ENCODE measurements at regions of chr3 and their contacts with region 1.

Region 1: DNA sequence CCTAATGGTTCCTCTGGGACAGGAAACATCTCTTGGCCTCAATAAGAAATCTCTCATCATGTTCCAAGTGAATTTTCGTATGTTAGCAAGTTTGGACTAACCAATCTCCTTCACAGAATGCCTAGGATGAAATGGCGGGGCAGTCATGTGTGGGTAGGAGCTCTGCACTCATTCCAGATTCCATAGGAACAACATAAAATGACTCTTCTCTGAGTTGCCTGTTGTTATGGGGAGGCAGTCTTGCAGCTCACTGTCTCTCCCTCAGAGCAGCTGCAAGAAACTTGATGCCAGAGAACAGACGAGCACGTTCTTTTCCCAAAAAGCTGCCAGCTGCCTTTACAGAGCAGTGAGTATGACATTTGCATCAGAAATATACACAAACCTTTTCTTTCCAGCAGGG is 34.1 kb downstream of the SPATA12 start:
- DNase-seq: peak; percentile 66
- H3K4me3 ChIP-seq: peak overlapping the region; percentile 39
- H3K27ac ChIP-seq: peak overlapping the region; percentile 36
- H3K4me1 ChIP-seq: peaks cover 28% of the 10 kb centered on the region
- H3K27me3 ChIP-seq: no peaks in the 10 kb centered on the region

Region 2: DNA sequence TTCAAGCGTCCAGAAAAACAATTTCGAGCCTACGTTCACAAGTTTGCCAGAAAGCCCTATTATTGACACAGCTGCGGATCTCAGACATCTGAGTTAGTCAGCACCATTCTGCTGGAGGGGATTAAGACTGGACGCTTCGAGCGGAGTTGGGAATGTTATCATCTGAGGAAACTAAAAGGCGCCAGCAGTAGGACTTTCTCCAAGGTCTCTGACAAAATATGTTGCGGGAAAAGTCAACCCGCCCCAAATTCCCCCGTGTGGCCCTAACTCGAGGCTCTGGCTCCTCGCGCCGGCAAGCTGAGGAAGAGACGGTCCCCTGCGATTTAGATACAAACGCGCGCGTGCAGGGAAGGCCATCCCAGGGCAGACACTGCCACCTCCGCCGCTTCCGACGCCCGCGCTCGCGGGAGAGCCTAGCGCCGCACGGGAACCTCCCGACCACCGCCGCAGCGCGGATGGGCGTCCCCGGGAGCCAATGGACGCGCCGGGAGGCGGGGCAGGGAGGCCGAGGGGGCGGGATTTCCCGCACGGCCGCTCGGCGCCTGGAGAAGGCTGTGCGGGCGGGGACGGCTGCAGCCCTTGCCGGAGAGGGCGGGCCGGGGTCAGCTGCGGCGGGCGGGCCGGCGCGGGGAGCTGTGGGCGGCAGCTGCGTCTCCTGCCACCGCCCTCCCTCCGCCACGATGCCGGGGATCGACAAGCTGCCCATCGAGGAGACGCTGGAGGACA is 132.8 kb after region 1 on chr3 and contains the start of gene APPL1:
- in situ Hi-C with region 1: loop called (anchors 10 kb)
- DNase-seq: peak; percentile 96
- H3K4me3 ChIP-seq: peak within 1 kb of the TSS; percentile 87
- H3K27ac ChIP-seq: peak within 1 kb of the TSS; percentile 75
- H3K4me1 ChIP-seq: peaks cover 32% of the 10 kb centered on the region
- H3K27me3 ChIP-seq: no peaks in the 10 kb centered on the region
- total RNA-seq, gene APPL1: 35.6 and 38.2 TPM in 2 replicates